HCT116 (cell line): ENCODE measurements at regions of chr19 and their contacts with region 1.

Region 1: GRCh38 chr19:45770192-45771101 is 1.4 kb upstream of the SIX5 start:
- DNase-seq: peak; percentile 96
- ATAC-seq: peak; percentile 77
- H3K4me3 ChIP-seq: peak overlapping the region; percentile 62 to 84
- H3K27ac ChIP-seq: peak overlapping the region; percentile 94
- H3K4me1 ChIP-seq: peaks cover 14 to 43% of the 10 kb centered on the region in 2 experiments
- H3K27me3 ChIP-seq: no peaks in the 10 kb centered on the region
- CTCF ChIP-seq: peak; percentile 85 to 86 (median 86); a peak in 5 of 6 replicates
- POLR2A ChIP-seq: peak; percentile 17
- RAD21 ChIP-seq: peak; percentile 88

Region 2: GRCh38 chr19:45692187-45693105 is 78.0 kb before region 1 on chr19 and contains the start of gene QPCTL:
- CTCF ChIA-PET with region 1: interaction called, 28 read pairs
- POLR2A ChIA-PET with region 1: interaction called, 3 read pairs
- RAD21 ChIA-PET with region 1: interaction called in 1 of 2 experiments, 4 read pairs
- intact Hi-C with region 1: loop called (anchors 2 kb)
- DNase-seq: peak; percentile 99
- ATAC-seq: peak; percentile 91
- H3K4me3 ChIP-seq: peak within 1 kb of the TSS; percentile 86 to 98
- H3K27ac ChIP-seq: peak within 1 kb of the TSS; percentile 79
- H3K4me1 ChIP-seq: peaks cover 3 to 13% of the 10 kb centered on the region in 2 experiments; a peak in 3 of 4 replicates
- H3K27me3 ChIP-seq: no peaks in the 10 kb centered on the region
- CTCF ChIP-seq: no peak
- POLR2A ChIP-seq: peak; percentile 61
- RAD21 ChIP-seq: no peak
- total RNA-seq, gene QPCTL: 19.5 TPM

Region 3: GRCh38 chr19:45730389-45731288 is 39.8 kb before region 1 on chr19 and contains the start of gene FBXO46:
- CTCF ChIA-PET with region 1: interaction called, 12 read pairs
- POLR2A ChIA-PET with region 1: interaction called, 6 read pairs
- RAD21 ChIA-PET with region 1: interaction called in 1 of 2 experiments, 5 read pairs
- intact Hi-C with region 1: loop called (anchors 2 kb)
- DNase-seq: peak; percentile 96
- ATAC-seq: peak; percentile 98
- H3K4me3 ChIP-seq: peak within 1 kb of the TSS; percentile 89 to 92
- H3K27ac ChIP-seq: peak within 1 kb of the TSS; percentile 75
- H3K4me1 ChIP-seq: peaks cover 6 to 43% of the 10 kb centered on the region in 2 experiments
- H3K27me3 ChIP-seq: no peaks in the 10 kb centered on the region
- CTCF ChIP-seq: 0 out of 6 replicates have a peak, but pooled peaks of 1 of the 3 experiments have one; percentile 7
- POLR2A ChIP-seq: no peak
- RAD21 ChIP-seq: no peak
- total RNA-seq, gene FBXO46: 31.7 TPM

Region 4: GRCh38 chr19:45792470-45793177 is 22.2 kb after region 1 on chr19 and contains the start of gene DMWD:
- CTCF ChIA-PET with region 1: interaction called, 17 read pairs
- POLR2A ChIA-PET with region 1: no interaction called
- RAD21 ChIA-PET with region 1: no interaction called
- intact Hi-C with region 1: no loop called
- DNase-seq: peak; percentile 98
- ATAC-seq: peak; percentile 98
- H3K4me3 ChIP-seq: peak within 1 kb of the TSS; percentile 92 to 99
- H3K27ac ChIP-seq: peak within 1 kb of the TSS; percentile 84
- H3K4me1 ChIP-seq: peaks cover 12 to 20% of the 10 kb centered on the region in 2 experiments; a peak in 3 of 4 replicates
- H3K27me3 ChIP-seq: no peaks in the 10 kb centered on the region
- CTCF ChIP-seq: no peak
- POLR2A ChIP-seq: no peak
- RAD21 ChIP-seq: no peak
- total RNA-seq, gene DMWD: 56.8 TPM

Region 5: DNA sequence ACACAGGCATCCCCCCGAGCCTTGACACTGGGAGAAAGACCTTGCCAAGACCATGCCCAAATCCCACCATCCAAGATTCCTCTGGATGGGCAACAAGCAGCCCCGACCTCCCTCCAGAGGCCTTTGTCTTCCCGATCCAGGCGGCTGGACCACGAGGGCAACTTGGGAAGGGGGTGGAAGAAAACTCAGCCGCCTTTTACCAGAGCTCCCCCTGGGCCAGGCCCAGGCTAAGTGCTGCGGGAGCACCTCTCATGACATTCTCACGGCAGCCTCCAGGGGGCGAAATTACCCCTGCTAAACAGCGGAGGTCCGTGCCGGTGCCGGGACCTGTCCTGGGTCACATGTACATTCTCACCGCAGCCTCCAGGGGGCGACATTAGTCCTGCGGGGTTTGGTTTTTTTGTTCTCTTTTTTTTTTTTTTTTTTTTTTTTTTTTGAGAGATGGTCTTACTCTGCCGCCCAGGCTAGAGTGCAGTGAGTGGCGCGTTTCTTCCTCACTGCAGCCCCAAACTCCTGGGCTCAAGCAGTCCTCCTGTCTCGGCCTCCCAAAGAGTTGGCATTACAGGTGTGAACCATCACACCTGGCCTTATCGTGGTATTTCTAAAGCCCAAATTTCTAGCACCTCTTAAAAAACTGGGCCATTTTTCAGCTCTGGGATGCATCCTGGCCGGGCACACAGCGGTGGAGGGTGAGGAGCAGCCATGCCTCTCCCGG is 46.7 kb after region 1 on chr19:
- CTCF ChIA-PET with region 1: interaction called, 26 read pairs
- POLR2A ChIA-PET with region 1: no interaction called
- RAD21 ChIA-PET with region 1: interaction called in 1 of 2 experiments, 5 read pairs
- intact Hi-C with region 1: no loop called
- DNase-seq: peak; percentile 90
- ATAC-seq: peak; percentile 93
- H3K4me3 ChIP-seq: no peak overlapping the region
- H3K27ac ChIP-seq: peak overlapping the region; percentile 50; the same call in 1 of the 2 replicates
- H3K4me1 ChIP-seq: peaks cover 3 to 11% of the 10 kb centered on the region in 2 experiments; a peak in 3 of 4 replicates
- H3K27me3 ChIP-seq: no peaks in the 10 kb centered on the region
- CTCF ChIP-seq: peak; percentile 99
- POLR2A ChIP-seq: no peak
- RAD21 ChIP-seq: peak; percentile 87

Region 6: DNA sequence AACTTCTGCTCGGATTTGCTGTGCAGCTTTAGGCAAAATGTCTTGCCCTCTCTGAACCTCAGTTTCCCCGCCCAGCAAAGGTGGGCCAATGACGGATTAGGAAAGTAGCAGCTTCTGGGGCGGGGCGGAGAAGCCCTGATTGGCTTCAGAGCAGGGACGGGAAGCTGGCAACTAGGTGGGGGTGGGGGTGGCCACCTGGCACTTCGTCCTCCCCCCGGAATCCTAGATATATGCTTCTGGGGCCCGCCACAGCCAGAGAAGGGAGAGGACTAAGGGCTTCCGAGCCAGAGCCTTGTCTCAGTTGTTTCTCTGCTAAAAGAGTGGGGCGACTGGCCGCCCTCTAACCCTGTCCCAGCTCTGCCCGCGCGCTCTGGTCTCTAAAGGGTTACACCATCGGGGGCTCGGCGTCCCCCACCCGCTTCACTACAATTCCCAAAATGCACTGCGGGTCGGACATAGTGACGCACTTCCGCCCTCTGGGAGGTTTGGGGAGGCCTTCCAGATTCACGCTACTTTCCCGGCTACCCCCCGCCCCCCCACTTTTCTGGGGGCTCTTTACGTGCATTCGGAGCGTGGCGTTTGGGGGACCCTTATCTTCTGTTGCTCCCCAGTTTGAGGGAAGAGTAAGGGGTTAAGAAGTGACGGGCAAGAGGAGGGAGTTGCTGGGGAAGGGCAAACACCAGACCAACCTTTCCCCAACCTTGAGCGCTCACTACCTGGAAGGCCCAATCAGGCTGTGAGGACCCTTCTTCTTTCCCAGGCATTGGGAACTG is 116.2 kb after region 1 on chr19:
- CTCF ChIA-PET with region 1: interaction called, 16 read pairs
- POLR2A ChIA-PET with region 1: no interaction called
- RAD21 ChIA-PET with region 1: no interaction called
- intact Hi-C with region 1: no loop called
- DNase-seq: peak; percentile 90
- ATAC-seq: peak; percentile 69
- H3K4me3 ChIP-seq: peak overlapping the region; percentile 71 to 75
- H3K27ac ChIP-seq: peak overlapping the region; percentile 91
- H3K4me1 ChIP-seq: peaks cover 18 to 39% of the 10 kb centered on the region in 2 experiments
- H3K27me3 ChIP-seq: no peaks in the 10 kb centered on the region
- CTCF ChIP-seq: no peak
- POLR2A ChIP-seq: no peak
- RAD21 ChIP-seq: no peak